CD4-positive, alpha-beta memory T cell (primary cell): ENCODE measurements at regions of chr6 and their contacts with region 1.

Region 1: DNA sequence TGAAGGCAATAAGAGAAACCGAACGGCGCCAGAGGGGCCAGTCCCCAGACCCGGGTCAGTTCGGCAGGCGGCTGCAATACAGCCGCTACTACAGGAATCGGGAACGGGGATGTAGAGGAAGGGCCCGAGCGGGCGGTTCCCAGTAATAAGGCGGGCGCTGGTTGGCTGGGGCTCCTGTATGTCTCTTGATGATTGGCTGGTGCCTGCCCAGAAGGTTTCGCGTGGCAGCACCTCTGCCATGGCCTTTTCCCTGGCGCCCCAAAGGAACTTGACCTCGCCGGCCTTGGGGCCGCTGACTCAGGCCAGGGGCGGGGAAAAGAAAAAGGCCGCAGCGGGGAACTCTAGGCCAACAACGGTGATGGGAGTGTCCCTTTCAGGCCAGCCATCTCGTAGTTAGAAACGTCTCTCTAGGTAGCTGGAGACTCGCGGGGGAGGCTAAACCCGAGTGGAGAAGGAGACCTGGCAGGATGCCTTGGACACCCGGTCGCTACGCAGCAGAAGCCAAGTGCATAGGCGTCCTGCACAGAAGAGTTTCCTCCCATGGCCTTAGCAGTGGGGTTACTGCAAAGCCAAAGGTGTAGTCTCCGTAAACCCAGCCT is at the start of gene IBTK:
- DNase-seq: peak; percentile 91 to 96 (median 92)
- H3K4me3 ChIP-seq: peak within 1 kb of the TSS; percentile 52 to 91
- H3K4me3 Mint-ChIP-seq: peak within 1 kb of the TSS; percentile 95 to 99 (median 98)
- H3K27ac ChIP-seq: peak within 1 kb of the TSS; percentile 88
- H3K27ac Mint-ChIP-seq: peak within 1 kb of the TSS; percentile 95 to 99 (median 98)
- H3K4me1 ChIP-seq: peaks cover 42% of the 10 kb centered on the region
- H3K4me1 Mint-ChIP-seq: peaks cover 26 to 53% (median 38%) of the 10 kb centered on the region in 4 donors
- H3K27me3 ChIP-seq: no peaks in the 10 kb centered on the region
- H3K27me3 Mint-ChIP-seq: no peaks in the 10 kb centered on the region
- total RNA-seq, gene IBTK: 28.9 to 29.5 TPM

Region 2: GRCh38 chr6:82227770-82228169 is 20.0 kb before region 1 on chr6:
- CTCF ChIA-PET with region 1: interaction called, 4 read pairs
- POLR2A ChIA-PET with region 1: interaction called, 10 read pairs
- intact Hi-C with region 1: no loop called
- DNase-seq: no peak
- H3K4me3 ChIP-seq: no peak overlapping the region
- H3K4me3 Mint-ChIP-seq: no peak overlapping the region
- H3K27ac ChIP-seq: no peak overlapping the region
- H3K27ac Mint-ChIP-seq: peak overlapping the region in 3 of 7 donors; percentile 38 to 81 (median 76)
- H3K4me1 ChIP-seq: peaks cover 6% of the 10 kb centered on the region
- H3K4me1 Mint-ChIP-seq: peaks cover 12 to 19% (median 17%) of the 10 kb centered on the region in 4 donors
- H3K27me3 ChIP-seq: no peaks in the 10 kb centered on the region
- H3K27me3 Mint-ChIP-seq: no peaks in the 10 kb centered on the region

Region 3: DNA sequence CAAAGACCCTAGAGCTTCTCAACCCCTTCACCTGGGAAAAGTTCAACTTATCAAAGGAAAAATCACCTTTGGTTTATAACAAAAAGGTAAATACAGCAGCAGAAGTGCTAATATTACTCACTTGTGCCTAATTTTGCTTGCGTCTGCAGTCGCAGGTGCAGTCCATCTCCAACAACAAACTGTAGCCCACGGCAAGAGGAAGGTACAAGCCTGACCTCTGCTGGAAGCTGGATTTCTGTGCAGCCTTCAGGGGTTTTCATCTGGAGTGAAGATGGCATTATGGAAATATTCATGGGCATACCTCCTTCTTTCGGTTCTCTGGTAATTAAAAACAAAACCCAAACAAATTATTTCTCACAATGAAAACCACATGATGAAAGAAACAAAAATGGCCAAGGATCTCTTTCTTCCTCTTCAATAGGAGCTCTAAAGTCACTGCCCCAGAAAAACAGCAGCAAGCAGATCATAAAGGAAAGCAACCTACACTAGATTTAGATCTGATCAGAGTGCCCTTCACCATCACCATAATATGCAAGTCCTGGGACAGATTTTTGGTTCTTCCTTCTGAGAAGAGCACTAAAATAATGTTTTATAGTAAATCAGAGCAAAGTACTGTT is 810.1 kb after region 1 on chr6:
- CTCF ChIA-PET with region 1: interaction called, 6 read pairs
- POLR2A ChIA-PET with region 1: no interaction called
- intact Hi-C with region 1: loop called (anchors 1 kb)
- DNase-seq: peak in 2 of 5 donors; percentile 18
- H3K4me3 ChIP-seq: no peak overlapping the region
- H3K4me3 Mint-ChIP-seq: no peak overlapping the region
- H3K27ac ChIP-seq: no peak overlapping the region
- H3K27ac Mint-ChIP-seq: peak overlapping the region in 1 of 7 donors; percentile 19
- H3K4me1 ChIP-seq: no peaks in the 10 kb centered on the region
- H3K4me1 Mint-ChIP-seq: peaks cover 0 to 14% (median 6%) of the 10 kb centered on the region in 4 donors
- H3K27me3 ChIP-seq: no peaks in the 10 kb centered on the region
- H3K27me3 Mint-ChIP-seq: no peaks in the 10 kb centered on the region